ENCODE measurements at regions of chr11 and their contacts with region 1.

Region 1: DNA sequence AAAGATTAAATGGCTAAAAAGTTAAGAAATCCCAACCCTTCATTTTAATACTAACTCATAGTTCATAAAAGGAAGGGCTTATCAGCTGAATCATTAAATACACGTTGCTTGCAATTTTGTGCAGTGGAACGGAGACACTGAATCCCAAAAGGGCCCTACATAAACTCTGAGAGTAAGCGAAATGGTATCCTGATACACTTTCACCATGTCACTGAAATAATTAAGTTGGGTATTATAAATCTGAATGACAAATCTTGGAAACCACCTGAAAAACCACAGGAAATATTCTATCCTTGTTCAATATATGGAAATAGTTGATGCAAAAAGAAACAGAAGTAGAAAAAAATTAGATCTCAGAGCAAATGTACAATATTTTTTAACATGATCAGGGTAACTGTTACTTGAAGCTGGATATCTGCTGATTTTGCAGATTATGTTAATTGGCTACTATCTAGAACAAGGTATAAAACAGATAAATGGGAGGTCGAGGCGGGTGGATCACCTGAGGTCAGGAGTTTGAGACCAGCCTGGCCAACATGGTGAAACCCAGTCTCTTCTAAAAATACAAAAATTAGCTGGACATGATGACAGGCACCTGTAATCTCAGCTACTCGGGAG is 55.1 kb downstream of the MAML2 start:
- DNase-seq: no peak
- ATAC-seq: no peak
- H3K4me3 Mint-ChIP-seq: peak overlapping the region; percentile 16
- H3K27ac Mint-ChIP-seq: peak overlapping the region; percentile 73
- H3K4me1 Mint-ChIP-seq: peaks cover 89% of the 10 kb centered on the region
- H3K27me3 Mint-ChIP-seq: no peaks in the 10 kb centered on the region
- CTCF ChIP-seq: no peak

Region 2: GRCh38 chr11:96242971-96243647 is 44.8 kb before region 1 on chr11:
- CTCF ChIA-PET with region 1: no interaction called
- POLR2A ChIA-PET with region 1: no interaction called
- intact Hi-C with region 1: loop called (anchors 5 kb)
- DNase-seq: peak; percentile 91
- ATAC-seq: peak; percentile 78
- H3K4me3 Mint-ChIP-seq: peak overlapping the region; percentile 74
- H3K27ac Mint-ChIP-seq: peak overlapping the region; percentile 89
- H3K4me1 Mint-ChIP-seq: peaks cover 49% of the 10 kb centered on the region
- H3K27me3 Mint-ChIP-seq: no peaks in the 10 kb centered on the region
- CTCF ChIP-seq: no peak

Region 3: GRCh38 chr11:96943970-96944369 is 656.0 kb after region 1 on chr11:
- CTCF ChIA-PET with region 1: no interaction called
- POLR2A ChIA-PET with region 1: no interaction called
- intact Hi-C with region 1: no loop called
- DNase-seq: no peak
- ATAC-seq: no peak
- H3K4me3 Mint-ChIP-seq: no peak overlapping the region
- H3K27ac Mint-ChIP-seq: no peak overlapping the region
- H3K4me1 Mint-ChIP-seq: no peaks in the 10 kb centered on the region
- H3K27me3 Mint-ChIP-seq: no peaks in the 10 kb centered on the region
- CTCF ChIP-seq: no peak

Measured in activated CD8-positive, alpha-beta T cell treated with anti-CD3 and anti-CD28 coated beads for 36 hours (primary cell).